Activated B cell treated with CpG ODN at 0.5 μM for 24 hours (primary cell): ENCODE measurements at regions of chr1 and their contacts with region 1.

Region 1: GRCh38 chr1:15975805-15976680 is at the start of gene ZBTB17:
- DNase-seq: peak; percentile 95
- ATAC-seq: peak; percentile 76
- H3K4me3 Mint-ChIP-seq: peak within 1 kb of the TSS; percentile 93
- H3K27ac Mint-ChIP-seq: peak within 1 kb of the TSS; percentile 96
- H3K4me1 Mint-ChIP-seq: peaks cover 43% of the 10 kb centered on the region
- H3K27me3 Mint-ChIP-seq: no peaks in the 10 kb centered on the region
- CTCF ChIP-seq: no peak
- total RNA-seq, gene ZBTB17: 109 and 121 TPM in 2 replicates

Region 2: DNA sequence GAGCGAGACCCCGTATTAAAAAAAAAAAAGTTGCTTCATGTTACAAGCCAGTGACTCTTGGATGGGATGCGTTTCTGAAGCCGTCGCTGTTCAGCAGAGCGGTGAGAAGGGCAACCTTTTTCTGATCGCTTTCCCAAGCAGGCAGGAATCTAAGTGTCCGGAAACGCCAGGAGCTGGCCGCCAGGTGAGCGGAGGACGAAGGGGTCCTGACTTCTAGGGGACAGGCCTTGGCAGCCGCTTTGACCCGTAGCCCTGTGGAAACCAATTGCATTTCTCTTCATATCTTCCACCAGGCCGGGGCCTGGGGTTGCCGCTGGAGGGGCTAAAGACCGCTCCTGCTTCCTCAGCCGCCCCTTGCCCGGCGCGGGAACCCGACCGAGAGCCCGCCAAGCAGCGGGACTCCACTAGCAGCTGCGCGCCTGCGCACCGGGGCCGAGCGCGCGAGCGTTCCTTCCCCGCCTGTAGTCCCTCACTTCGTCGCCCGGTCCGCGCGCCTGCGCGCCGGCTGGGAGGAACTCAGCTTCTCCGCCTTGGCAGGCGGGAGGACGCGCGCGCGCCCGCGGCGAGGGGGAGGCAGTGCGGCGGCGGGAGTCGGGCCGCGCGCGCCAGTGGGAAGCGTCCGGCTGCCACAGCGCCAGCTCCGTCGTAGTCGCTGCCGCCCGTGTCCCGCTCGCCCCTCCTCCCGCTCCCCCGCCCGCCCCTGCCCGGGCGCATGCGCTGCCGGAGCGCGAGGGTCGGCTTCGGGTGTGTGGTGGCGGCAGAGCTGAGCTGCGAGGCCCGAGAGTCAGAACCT is 128.7 kb before region 1 on chr1 and contains the start of gene SPEN:
- CTCF ChIA-PET with region 1: no interaction called
- POLR2A ChIA-PET with region 1: interaction called, 30 read pairs
- intact Hi-C with region 1: loop called (anchors 1 kb)
- DNase-seq: peak; percentile 99
- ATAC-seq: peak; percentile 74
- H3K4me3 Mint-ChIP-seq: peak within 1 kb of the TSS; percentile 99
- H3K27ac Mint-ChIP-seq: peak within 1 kb of the TSS; percentile 98
- H3K4me1 Mint-ChIP-seq: peaks cover 62% of the 10 kb centered on the region
- H3K27me3 Mint-ChIP-seq: no peaks in the 10 kb centered on the region
- CTCF ChIP-seq: no peak
- total RNA-seq, gene SPEN: 116 and 123 TPM in 2 replicates

Region 3: DNA sequence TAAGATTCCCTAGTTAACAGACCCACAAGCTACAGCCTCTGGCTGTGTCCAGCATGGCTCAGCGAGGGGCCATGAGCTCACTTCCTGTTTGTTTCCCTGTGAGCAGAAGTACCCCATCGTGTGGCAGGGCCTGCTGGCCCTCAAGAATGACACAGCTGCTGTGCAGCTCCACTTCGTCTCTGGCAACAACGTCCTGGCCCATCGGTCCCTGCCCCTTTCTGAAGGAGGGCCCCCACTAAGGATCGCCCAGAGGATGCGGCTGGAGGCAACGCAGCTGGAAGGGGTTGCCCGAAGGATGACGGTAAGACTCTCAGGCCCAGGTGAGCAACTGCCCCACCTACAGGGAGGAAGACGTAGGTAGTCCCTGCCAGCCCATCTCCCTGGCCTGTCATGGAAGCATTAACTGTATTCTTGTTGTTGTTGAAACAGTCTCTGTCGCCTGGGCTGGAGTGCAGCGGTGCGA is 38.3 kb before region 1 on chr1:
- CTCF ChIA-PET with region 1: no interaction called
- POLR2A ChIA-PET with region 1: interaction called, 6 read pairs
- intact Hi-C with region 1: loop called (anchors 5 kb)
- DNase-seq: no peak
- ATAC-seq: no peak
- H3K4me3 Mint-ChIP-seq: no peak overlapping the region
- H3K27ac Mint-ChIP-seq: peak overlapping the region; percentile 86
- H3K4me1 Mint-ChIP-seq: peaks cover 7% of the 10 kb centered on the region
- H3K27me3 Mint-ChIP-seq: no peaks in the 10 kb centered on the region
- CTCF ChIP-seq: no peak

Region 4: GRCh38 chr1:15949453-15950245 is 26.4 kb before region 1 on chr1:
- CTCF ChIA-PET with region 1: interaction called, 22 read pairs
- POLR2A ChIA-PET with region 1: interaction called, 94 read pairs
- intact Hi-C with region 1: loop called (anchors 1 kb)
- DNase-seq: peak; percentile 62
- ATAC-seq: peak; percentile 82
- H3K4me3 Mint-ChIP-seq: peak overlapping the region; percentile 67
- H3K27ac Mint-ChIP-seq: peak overlapping the region; percentile 89
- H3K4me1 Mint-ChIP-seq: peaks cover 73% of the 10 kb centered on the region
- H3K27me3 Mint-ChIP-seq: no peaks in the 10 kb centered on the region
- CTCF ChIP-seq: no peak

Region 5: DNA sequence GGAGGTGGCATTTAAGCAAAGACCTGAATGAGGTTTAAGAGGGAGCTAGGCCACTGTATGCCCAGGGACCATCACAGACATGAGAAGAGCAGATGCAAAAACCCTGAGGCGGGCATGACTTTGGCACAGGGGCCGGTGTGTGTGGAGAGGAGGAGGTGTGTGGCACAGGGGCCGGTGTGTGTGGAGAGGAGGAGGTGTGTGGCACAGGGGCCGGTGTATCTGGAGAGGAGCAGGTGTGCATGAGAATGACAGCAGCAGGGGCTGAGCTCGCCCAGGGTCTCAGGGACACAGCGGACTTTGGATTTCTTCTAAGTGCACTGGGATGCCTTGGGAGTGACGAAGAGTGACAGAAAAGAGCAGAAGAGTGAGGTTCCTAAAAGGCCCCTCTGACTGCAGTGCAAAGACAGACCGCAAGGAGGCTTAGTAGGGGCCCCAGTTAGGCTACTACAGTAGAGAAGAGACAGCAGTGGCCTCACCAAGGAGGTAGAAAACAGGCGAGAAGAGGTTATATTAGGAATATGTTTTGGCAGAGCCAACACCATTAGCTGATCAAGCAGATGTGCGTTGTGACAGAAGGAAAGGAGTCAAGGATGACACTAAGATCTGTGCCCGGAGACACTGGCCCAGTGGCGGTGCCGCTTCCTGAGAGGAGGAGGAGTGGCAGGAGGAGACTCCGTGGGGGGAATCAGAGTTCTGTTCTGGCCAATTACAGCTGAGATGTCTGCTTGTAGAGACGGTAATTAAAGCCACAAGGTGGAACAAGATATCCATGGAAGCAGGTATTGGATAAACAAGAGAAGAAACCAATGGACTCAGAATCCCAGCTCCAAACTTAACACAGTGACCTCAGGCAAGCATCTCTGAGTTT is 18.6 kb before region 1 on chr1:
- CTCF ChIA-PET with region 1: interaction called, 17 read pairs
- POLR2A ChIA-PET with region 1: interaction called, 282 read pairs
- intact Hi-C with region 1: loop called (anchors 2 kb)
- DNase-seq: no peak
- ATAC-seq: no peak
- H3K4me3 Mint-ChIP-seq: no peak overlapping the region
- H3K27ac Mint-ChIP-seq: peak overlapping the region; percentile 69
- H3K4me1 Mint-ChIP-seq: peaks cover 71% of the 10 kb centered on the region
- H3K27me3 Mint-ChIP-seq: no peaks in the 10 kb centered on the region
- CTCF ChIP-seq: no peak

Region 6: DNA sequence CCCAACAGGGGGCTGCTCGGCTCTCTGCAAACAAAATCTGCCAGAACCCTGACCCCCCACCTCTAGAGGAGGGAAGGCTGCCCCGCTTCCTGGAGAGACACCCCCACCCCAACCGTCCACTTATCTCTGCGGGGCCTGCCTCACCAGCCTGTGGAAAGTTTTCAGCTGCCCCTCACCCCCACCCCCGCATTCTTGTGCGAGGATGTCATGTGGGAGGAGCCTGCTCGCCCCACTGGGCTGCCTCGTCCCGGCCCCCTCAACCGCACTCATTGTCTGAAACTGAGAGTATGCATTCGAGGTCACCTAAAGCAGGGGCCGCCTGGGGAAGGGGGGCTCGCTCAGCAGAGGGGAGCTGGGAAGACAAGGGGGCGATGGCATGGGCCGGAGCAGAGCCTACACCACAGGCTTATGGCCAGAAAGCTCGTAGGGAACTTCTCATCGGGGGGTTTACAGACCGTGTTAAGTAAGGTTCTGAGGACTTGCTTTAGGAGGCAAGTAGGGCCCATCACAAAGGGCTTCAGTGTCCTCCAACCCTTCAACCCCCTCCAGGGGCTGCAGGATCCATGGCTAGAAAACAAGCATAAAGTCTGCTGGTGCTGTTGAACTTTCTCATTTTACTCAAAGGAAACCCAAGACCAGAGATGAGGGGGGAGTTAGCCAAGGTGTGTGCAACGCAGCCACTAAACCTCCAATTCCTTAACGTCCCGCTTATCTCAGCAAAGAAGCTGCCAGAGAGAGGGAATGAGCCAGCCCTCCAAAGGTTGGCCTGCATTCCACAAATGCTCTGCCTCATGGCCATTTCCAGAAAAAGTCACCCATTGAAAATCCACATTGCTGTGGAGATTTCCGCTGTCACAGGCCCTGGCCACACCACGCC is 170.5 kb after region 1 on chr1:
- CTCF ChIA-PET with region 1: no interaction called
- POLR2A ChIA-PET with region 1: no interaction called
- intact Hi-C with region 1: no loop called
- DNase-seq: no peak
- ATAC-seq: no peak
- H3K4me3 Mint-ChIP-seq: no peak overlapping the region
- H3K27ac Mint-ChIP-seq: no peak overlapping the region
- H3K4me1 Mint-ChIP-seq: no peaks in the 10 kb centered on the region
- H3K27me3 Mint-ChIP-seq: peaks cover 32% of the 10 kb centered on the region
- CTCF ChIP-seq: no peak

Region 7: DNA sequence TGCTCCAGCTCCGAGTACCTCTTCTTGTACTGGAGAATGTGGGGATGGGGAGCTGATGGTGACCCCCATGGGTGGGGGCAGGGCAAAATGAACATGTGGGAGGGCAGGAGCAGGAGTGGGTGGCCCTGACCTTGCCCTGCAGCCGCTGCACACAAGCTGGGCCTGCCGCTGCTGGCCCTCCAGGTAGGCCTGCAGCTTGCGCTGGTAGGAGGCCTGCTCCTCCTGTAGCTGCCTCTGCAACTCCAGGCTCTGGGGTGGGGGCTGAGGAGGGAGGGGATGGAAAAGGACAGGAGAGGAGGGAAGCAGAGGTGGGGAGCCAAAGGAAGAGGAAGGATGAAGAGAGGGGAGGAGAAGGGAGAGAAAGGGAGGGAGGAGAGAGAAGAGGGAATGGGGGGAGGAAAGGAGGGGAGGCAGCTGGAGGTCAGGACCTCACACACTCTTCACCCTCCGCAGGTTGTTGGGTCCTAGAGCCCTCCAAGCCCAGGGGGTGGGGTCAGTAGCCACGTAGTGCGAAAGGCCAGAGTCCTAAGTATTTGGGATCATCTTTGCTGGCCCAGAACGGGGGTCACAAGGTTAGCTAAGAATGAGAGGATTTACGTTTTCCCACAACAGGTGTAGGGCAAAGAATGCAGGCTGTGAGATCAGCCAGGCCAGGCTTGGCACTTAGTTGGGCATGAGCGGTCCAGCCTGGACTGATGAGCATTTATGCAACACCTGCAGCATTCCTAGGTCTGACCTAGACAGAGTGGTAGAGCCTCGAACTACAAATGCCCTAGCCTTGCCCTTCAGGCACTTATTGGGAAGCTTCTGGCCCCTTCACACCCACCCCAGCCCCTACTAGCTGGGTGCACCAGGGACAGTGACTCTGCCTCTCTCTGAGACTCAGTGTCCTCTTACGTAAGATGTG is 515.3 kb after region 1 on chr1:
- CTCF ChIA-PET with region 1: no interaction called
- POLR2A ChIA-PET with region 1: no interaction called
- intact Hi-C with region 1: no loop called
- DNase-seq: no peak
- ATAC-seq: no peak
- H3K4me3 Mint-ChIP-seq: no peak overlapping the region
- H3K27ac Mint-ChIP-seq: no peak overlapping the region
- H3K4me1 Mint-ChIP-seq: no peaks in the 10 kb centered on the region
- H3K27me3 Mint-ChIP-seq: no peaks in the 10 kb centered on the region
- CTCF ChIP-seq: no peak